CD4-positive, alpha-beta memory T cell (primary cell): ENCODE measurements at regions of chr1 and their contacts with region 1.

Region 1: DNA sequence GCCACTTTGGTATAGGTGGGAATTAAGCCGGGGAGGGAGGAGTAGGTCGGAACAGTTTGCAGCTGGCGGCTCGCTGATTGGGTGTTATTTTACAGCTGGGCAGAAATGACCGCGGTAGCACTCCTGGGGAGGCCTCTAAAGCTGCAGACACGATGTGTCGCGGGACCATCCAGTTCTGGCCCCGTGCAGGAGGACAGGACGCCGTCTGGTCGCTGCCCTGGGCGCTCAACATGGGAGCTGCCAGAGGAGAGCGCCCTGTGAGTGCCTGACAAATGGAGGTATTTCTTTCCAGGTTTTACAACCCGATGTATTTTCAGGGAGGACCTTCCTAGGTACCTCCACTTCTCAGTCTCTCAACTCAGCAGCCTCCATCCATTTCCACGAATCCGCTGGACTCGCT is 46.2 kb downstream of the CDC7 start:
- DNase-seq: no peak
- H3K4me3 ChIP-seq: no peak overlapping the region
- H3K4me3 Mint-ChIP-seq: peak overlapping the region in 1 of 8 donors; percentile 81
- H3K27ac ChIP-seq: peak overlapping the region; percentile 7
- H3K27ac Mint-ChIP-seq: peak overlapping the region; percentile 35 to 95 (median 92)
- H3K4me1 ChIP-seq: peaks cover 67% of the 10 kb centered on the region
- H3K4me1 Mint-ChIP-seq: peaks cover 45 to 76% (median 57%) of the 10 kb centered on the region in 4 donors
- H3K27me3 ChIP-seq: no peaks in the 10 kb centered on the region
- H3K27me3 Mint-ChIP-seq: peaks cover 0 to 1% of the 10 kb centered on the region in 2 donors

Region 2: GRCh38 chr1:91569411-91570119 is 22.7 kb after region 1 on chr1:
- CTCF ChIA-PET with region 1: no interaction called
- POLR2A ChIA-PET with region 1: interaction called, 12 read pairs
- intact Hi-C with region 1: no loop called
- DNase-seq: peak in 1 of 5 donors; percentile 34
- H3K4me3 ChIP-seq: no peak overlapping the region
- H3K4me3 Mint-ChIP-seq: peak overlapping the region in 2 of 8 donors; percentile 64 to 77
- H3K27ac ChIP-seq: no peak overlapping the region
- H3K27ac Mint-ChIP-seq: peak overlapping the region; percentile 43 to 89 (median 79)
- H3K4me1 ChIP-seq: peaks cover 13% of the 10 kb centered on the region
- H3K4me1 Mint-ChIP-seq: peaks cover 10 to 29% (median 20%) of the 10 kb centered on the region in 4 donors
- H3K27me3 ChIP-seq: no peaks in the 10 kb centered on the region
- H3K27me3 Mint-ChIP-seq: no peaks in the 10 kb centered on the region

Region 3: GRCh38 chr1:91611498-91611917 is 64.6 kb after region 1 on chr1:
- CTCF ChIA-PET with region 1: no interaction called
- POLR2A ChIA-PET with region 1: no interaction called
- intact Hi-C with region 1: no loop called
- DNase-seq: no peak
- H3K4me3 ChIP-seq: no peak overlapping the region
- H3K4me3 Mint-ChIP-seq: no peak overlapping the region
- H3K27ac ChIP-seq: no peak overlapping the region
- H3K27ac Mint-ChIP-seq: no peak overlapping the region
- H3K4me1 ChIP-seq: no peaks in the 10 kb centered on the region
- H3K4me1 Mint-ChIP-seq: peaks cover 0 to 4% (median 1%) of the 10 kb centered on the region in 4 donors
- H3K27me3 ChIP-seq: no peaks in the 10 kb centered on the region
- H3K27me3 Mint-ChIP-seq: no peaks in the 10 kb centered on the region

Region 4: GRCh38 chr1:91697416-91697815 is 150.5 kb after region 1 on chr1:
- CTCF ChIA-PET with region 1: no interaction called
- POLR2A ChIA-PET with region 1: no interaction called
- intact Hi-C with region 1: loop called (anchors 10 kb)
- DNase-seq: peak; percentile 56 to 75 (median 58)
- H3K4me3 ChIP-seq: no peak overlapping the region
- H3K4me3 Mint-ChIP-seq: peak overlapping the region in 7 of 8 donors; percentile 11 to 77 (median 39)
- H3K27ac ChIP-seq: no peak overlapping the region
- H3K27ac Mint-ChIP-seq: peak overlapping the region; percentile 74 to 91 (median 79)
- H3K4me1 ChIP-seq: peaks cover 23% of the 10 kb centered on the region
- H3K4me1 Mint-ChIP-seq: peaks cover 25 to 47% (median 39%) of the 10 kb centered on the region in 4 donors
- H3K27me3 ChIP-seq: no peaks in the 10 kb centered on the region
- H3K27me3 Mint-ChIP-seq: no peaks in the 10 kb centered on the region